ENCODE measurements at regions of chr1 and their contacts with region 1.

Region 1: DNA sequence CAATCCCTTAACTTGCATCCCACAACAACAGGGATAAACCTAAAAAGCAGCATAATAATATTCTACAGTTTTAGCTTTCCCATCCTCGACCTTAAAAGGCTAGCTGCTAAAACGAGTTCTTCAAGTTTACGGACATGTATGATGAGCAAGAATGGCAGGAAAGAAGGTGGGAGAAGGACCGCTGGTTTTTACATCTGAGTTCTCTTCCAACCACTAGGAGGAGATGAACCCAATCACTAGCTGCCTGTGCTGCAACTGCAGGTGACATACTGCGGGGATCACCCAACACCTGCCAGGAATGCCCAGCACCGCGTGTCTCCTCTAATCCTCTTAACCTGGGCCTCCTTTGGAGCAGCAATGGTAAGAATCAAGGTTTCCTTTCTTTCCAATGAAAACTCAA is 23.5 kb downstream of the TOR3A start:
- DNase-seq: no peak
- H3K4me3 Mint-ChIP-seq: no peak overlapping the region
- H3K27ac Mint-ChIP-seq: no peak overlapping the region
- H3K4me1 Mint-ChIP-seq: no peaks in the 10 kb centered on the region
- H3K27me3 Mint-ChIP-seq: no peaks in the 10 kb centered on the region

Region 2: GRCh38 chr1:179082333-179083120 is 22.8 kb before region 1 on chr1:
- CTCF ChIA-PET with region 1: interaction called, 3 read pairs
- POLR2A ChIA-PET with region 1: interaction called, 11 read pairs
- DNase-seq: peak; percentile 32
- H3K4me3 Mint-ChIP-seq: peak overlapping the region; percentile 96
- H3K27ac Mint-ChIP-seq: peak overlapping the region; percentile 95
- H3K4me1 Mint-ChIP-seq: peaks cover 38% of the 10 kb centered on the region
- H3K27me3 Mint-ChIP-seq: no peaks in the 10 kb centered on the region

Region 3: GRCh38 chr1:179190861-179191260 is 85.5 kb after region 1 on chr1:
- CTCF ChIA-PET with region 1: no interaction called
- POLR2A ChIA-PET with region 1: no interaction called
- DNase-seq: no peak
- H3K4me3 Mint-ChIP-seq: no peak overlapping the region
- H3K27ac Mint-ChIP-seq: no peak overlapping the region
- H3K4me1 Mint-ChIP-seq: peaks cover 14% of the 10 kb centered on the region
- H3K27me3 Mint-ChIP-seq: no peaks in the 10 kb centered on the region

Measured in activated CD4-positive, alpha-beta T cell treated with anti-CD3 and anti-CD28 coated beads, Interleukin-2, amount 10 ng/mL, durations not matched to agents 7 days and 5 days (primary cell).